Psoas muscle (tissue), 8 donors: ENCODE measurements at regions of chr15 and their contacts with region 1.

Region 1: DNA sequence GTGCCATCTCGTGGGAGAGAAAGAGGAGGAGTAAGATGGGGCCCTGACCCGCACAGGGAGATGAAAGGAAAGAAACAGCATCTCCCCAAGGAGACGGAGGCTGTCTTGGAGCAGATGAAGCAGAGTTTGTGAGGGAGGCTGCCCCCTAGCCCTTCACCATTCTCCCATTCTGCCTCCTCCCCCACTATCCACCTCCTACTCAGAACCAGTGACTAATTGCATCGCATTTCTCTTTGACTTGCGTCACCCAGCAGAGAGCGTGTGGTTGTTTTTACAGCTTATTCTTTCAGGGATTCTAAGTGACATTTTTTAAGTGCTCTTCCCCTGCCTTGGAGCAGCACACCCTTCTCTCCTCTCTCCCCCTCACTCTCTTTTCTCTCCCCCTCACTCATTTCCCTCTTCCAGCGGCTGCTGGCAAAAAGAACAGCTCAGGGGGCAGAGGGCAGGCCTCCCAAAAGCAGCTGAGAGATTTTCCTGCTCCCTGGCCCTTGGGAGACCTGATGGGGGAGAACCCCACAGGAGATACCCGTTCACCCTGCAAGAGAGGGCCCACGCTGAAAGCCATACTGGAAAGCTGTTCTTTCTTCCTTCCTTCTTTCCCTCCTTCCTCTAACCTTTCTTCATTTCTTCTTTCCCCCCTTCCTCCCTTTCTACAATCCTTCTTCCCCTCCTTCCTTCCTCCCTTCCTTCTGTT is 91.8 kb downstream of the MRPL46 start:
- DNase-seq: no peak
- ATAC-seq: no peak
- H3K4me3 ChIP-seq: no peak overlapping the region
- H3K27ac ChIP-seq: no peak overlapping the region
- H3K4me1 ChIP-seq: no peaks in the 10 kb centered on the region
- H3K27me3 ChIP-seq: no peaks in the 10 kb centered on the region
- CTCF ChIP-seq: no peak

Region 2: GRCh38 chr15:88365124-88365523 is 10.3 kb before region 1 on chr15:
- intact Hi-C with region 1: no loop called
- DNase-seq: no peak
- ATAC-seq: no peak
- H3K4me3 ChIP-seq: no peak overlapping the region
- H3K27ac ChIP-seq: no peak overlapping the region
- H3K4me1 ChIP-seq: no peaks in the 10 kb centered on the region
- H3K27me3 ChIP-seq: no peaks in the 10 kb centered on the region
- CTCF ChIP-seq: no peak

Region 3: DNA sequence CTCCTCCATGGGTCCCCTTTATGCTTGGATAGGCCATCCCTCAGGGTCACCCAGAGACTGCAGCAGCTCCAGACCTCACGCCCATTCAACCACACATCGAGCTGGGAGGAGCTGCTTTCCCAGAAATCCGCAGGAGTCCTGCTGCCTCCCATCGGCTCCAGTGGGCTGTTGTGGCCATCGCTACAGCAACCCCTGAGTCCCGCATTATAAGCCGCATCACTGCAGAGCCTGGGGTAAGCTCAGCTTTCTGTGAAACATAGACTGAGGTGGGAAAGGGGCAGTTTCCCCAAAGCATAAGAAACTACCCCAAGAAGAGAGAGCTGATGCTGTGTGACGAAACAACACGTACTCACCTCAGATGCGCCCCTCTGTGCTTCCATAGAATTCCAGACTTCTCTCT is 56.1 kb after region 1 on chr15:
- intact Hi-C with region 1: loop called in 1 of 2 experiments (anchors 10 kb)
- DNase-seq: no peak
- ATAC-seq: no peak
- H3K4me3 ChIP-seq: no peak overlapping the region
- H3K27ac ChIP-seq: no peak overlapping the region
- H3K4me1 ChIP-seq: no peaks in the 10 kb centered on the region
- H3K27me3 ChIP-seq: peaks cover 0 to 12% (median 0%) of the 10 kb centered on the region in 3 donors
- CTCF ChIP-seq: no peak